Activated naive CD4-positive, alpha-beta T cell treated with anti-CD3 and anti-CD28 coated beads for 36 hours (primary cell): ENCODE measurements at regions of chr7 and their contacts with region 1.

Region 1: GRCh38 chr7:17095001-17095574 is 203.4 kb upstream of the AHR start:
- DNase-seq: no peak
- H3K4me3 Mint-ChIP-seq: no peak overlapping the region
- H3K27ac Mint-ChIP-seq: no peak overlapping the region
- H3K4me1 Mint-ChIP-seq: peaks cover 5% of the 10 kb centered on the region
- H3K27me3 Mint-ChIP-seq: no peaks in the 10 kb centered on the region

Region 2: DNA sequence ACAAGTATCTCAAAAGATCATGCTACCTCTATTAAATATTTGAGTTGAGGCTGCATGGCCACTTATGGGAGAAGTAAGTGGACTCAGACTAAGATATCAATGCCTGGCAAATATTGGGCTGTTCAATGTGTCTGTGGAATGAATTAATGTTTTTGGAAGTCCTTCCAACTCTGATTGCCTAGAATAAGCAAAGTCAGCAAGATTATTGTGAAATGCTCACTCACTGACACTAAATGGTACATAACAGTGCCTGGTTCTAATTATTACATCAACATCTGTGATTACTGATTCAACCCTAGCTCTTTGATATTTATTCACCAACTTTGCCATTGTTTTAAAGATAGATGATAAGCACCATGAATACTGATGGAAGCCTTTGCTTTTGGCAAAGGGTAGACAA is 1354.9 kb after region 1 on chr7:
- CTCF ChIA-PET with region 1: no interaction called
- intact Hi-C with region 1: loop called (anchors 5 kb)
- DNase-seq: no peak
- H3K4me3 Mint-ChIP-seq: no peak overlapping the region
- H3K27ac Mint-ChIP-seq: no peak overlapping the region
- H3K4me1 Mint-ChIP-seq: no peaks in the 10 kb centered on the region
- H3K27me3 Mint-ChIP-seq: no peaks in the 10 kb centered on the region